T-cell (primary cell): ENCODE measurements at regions of chr7 and their contacts with region 1.

Region 1: DNA sequence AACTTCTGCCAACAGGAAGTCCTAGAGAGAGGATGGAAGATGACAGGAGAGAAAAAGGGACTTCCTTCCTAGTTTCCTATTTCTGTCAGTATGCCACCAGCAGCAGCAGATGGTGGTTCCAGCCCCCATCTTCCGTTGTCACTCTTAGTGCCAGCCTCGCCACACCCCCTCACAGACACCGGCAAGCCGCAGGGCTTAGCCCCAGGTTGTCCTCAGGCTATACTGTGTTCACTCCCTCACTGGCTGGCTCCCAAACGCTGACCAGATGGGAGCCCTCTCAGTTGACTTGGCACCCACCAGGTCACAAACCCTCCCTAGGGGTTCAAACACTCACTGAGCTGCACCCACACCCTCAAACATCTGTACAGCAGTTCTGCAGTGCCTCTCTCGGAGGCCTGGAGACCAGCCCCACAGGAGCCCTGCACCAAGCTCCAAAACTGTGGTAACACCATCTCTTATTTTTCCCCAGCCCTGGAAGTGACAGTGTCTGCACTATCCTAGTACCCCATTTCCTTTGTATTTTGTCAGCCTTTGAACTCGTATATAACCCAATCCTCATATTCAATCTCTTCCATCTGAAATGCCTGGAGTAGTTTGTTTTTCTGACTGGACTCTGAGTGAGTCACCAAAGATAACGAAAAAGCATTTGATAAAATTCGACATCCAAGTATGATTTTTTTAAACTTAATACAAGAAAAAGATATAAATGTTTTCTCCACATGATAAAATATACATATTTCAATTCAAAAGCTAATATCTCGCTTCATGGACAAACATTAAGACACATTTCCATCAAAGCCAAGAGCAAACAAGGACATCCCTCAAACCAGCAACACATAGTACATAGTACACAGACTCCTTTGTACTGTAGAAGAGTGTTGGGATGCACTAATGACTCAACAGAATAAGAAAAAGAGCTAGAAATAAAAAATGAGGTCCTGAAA is 34.5 kb downstream of the SMURF1 start:
- DNase-seq: peak in 19 of 35 experiments; percentile 3 to 29 (median 9)
- ATAC-seq: peak; percentile 68 to 80 (median 75)
- H3K4me3 ChIP-seq: no peak overlapping the region
- H3K4me3 Mint-ChIP-seq: peak overlapping the region in 2 of 3 donors; percentile 28 to 66
- H3K27ac ChIP-seq: no peak overlapping the region
- H3K27ac Mint-ChIP-seq: peak overlapping the region in 1 of 2 donors; percentile 31
- H3K4me1 ChIP-seq: peaks cover 11 to 20% of the 10 kb centered on the region in 2 experiments
- H3K4me1 Mint-ChIP-seq: peaks cover 68 to 83% (median 72%) of the 10 kb centered on the region in 3 donors
- H3K27me3 ChIP-seq: no peaks in the 10 kb centered on the region
- H3K27me3 Mint-ChIP-seq: no peaks in the 10 kb centered on the region

Region 2: DNA sequence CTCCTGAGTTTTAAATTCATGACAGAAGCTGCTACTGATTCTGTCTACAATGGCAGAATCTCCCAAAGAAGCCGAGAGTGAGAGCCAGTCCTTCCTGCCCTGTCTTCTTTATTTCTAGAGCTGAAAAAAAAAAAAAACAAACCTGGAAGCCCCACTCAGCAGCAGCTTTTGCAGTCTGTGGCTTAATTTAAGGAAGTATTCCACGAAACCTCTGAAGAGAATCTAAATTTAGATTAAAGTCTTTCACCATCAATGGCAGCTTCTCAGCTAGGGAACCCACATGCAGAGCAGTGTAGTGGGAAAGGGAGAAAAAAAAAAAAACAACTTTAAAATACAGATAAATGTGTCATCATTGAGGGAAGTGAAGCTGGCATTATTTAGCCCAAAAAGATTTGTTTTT is 11.1 kb after region 1 on chr7:
- CTCF ChIA-PET with region 1: interaction called in 1 of 2 experiments, 3 read pairs
- POLR2A ChIA-PET with region 1: interaction called in 1 of 2 experiments, 11 read pairs
- DNase-seq: no peak
- ATAC-seq: no peak
- H3K4me3 ChIP-seq: no peak overlapping the region
- H3K4me3 Mint-ChIP-seq: no peak overlapping the region
- H3K27ac ChIP-seq: no peak overlapping the region
- H3K27ac Mint-ChIP-seq: no peak overlapping the region
- H3K4me1 ChIP-seq: peaks cover 6 to 7% of the 10 kb centered on the region in 2 experiments
- H3K4me1 Mint-ChIP-seq: peaks cover 43 to 65% (median 63%) of the 10 kb centered on the region in 3 donors
- H3K27me3 ChIP-seq: no peaks in the 10 kb centered on the region
- H3K27me3 Mint-ChIP-seq: no peaks in the 10 kb centered on the region

Region 3: DNA sequence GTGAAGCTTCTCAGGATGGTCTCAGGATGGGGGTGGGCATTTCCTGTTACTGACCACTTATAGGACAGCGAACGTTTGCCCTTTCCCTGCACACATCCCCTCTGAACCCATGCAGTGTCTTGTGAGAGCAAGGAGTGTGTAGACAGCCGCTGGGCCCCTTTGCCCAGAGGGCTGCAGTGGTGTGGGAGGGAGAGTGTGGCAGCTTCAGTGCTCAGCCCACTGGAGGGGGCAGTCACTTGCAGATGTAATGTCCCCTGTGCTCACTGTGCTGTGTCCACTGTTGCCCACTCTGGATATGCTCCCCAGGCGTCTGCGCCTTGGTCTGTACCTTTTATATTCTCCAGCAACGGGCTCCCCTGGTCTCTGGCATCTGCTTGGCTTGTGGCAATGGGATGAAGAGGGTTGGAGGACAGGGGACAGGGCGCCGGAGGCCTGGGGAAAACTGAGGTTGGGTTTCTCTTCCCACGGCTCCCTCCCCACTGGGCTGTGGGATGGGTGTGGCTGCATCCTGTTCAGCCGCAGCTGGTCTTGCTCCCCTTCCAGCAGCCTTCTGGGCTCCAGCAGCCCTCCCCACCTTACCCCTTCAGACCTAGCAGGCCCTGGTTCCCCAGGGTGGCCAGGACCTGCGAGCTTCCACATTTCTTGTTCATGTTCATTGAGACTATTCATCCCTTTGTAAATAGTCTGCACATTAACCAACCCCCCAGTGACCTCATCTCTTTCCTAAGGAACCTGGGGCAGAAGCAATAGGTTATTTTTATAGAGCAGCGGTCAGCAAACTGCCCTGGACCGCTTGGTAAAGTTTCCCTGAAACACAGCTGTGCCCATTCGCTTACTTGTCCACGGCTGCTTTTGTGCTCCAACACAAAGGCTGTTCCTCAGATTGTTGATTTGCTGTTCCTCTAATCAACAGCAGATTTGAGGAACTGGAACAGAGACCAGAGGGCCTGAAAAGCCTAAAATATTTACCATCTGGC is 369.4 kb after region 1 on chr7:
- CTCF ChIA-PET with region 1: no interaction called
- POLR2A ChIA-PET with region 1: no interaction called
- DNase-seq: no peak
- ATAC-seq: peak in 2 of 4 experiments; percentile 45 to 53
- H3K4me3 ChIP-seq: no peak overlapping the region
- H3K4me3 Mint-ChIP-seq: peak overlapping the region in 1 of 3 donors; percentile 59
- H3K27ac ChIP-seq: peak overlapping the region; percentile 43
- H3K27ac Mint-ChIP-seq: peak overlapping the region; percentile 84 to 86
- H3K4me1 ChIP-seq: peaks cover 10 to 28% of the 10 kb centered on the region in 2 experiments
- H3K4me1 Mint-ChIP-seq: peaks cover 33 to 41% (median 33%) of the 10 kb centered on the region in 3 donors
- H3K27me3 ChIP-seq: no peaks in the 10 kb centered on the region
- H3K27me3 Mint-ChIP-seq: no peaks in the 10 kb centered on the region